CD8-positive, alpha-beta T cell (primary cell): ENCODE measurements at regions of chr15 and their contacts with region 1.

Region 1: GRCh38 chr15:67501177-67501835 is 19.6 kb upstream of the C15orf61 start:
- DNase-seq: peak in 2 of 9 experiments; percentile 24 to 38
- ATAC-seq: no peak
- H3K4me3 ChIP-seq: no peak overlapping the region
- H3K4me3 Mint-ChIP-seq: no peak overlapping the region
- H3K27ac ChIP-seq: no peak overlapping the region
- H3K27ac Mint-ChIP-seq: no peak overlapping the region
- H3K4me1 ChIP-seq: no peaks in the 10 kb centered on the region
- H3K4me1 Mint-ChIP-seq: no peaks in the 10 kb centered on the region
- H3K27me3 ChIP-seq: no peaks in the 10 kb centered on the region
- H3K27me3 Mint-ChIP-seq: no peaks in the 10 kb centered on the region
- CTCF ChIP-seq: peak; percentile 27

Region 2: DNA sequence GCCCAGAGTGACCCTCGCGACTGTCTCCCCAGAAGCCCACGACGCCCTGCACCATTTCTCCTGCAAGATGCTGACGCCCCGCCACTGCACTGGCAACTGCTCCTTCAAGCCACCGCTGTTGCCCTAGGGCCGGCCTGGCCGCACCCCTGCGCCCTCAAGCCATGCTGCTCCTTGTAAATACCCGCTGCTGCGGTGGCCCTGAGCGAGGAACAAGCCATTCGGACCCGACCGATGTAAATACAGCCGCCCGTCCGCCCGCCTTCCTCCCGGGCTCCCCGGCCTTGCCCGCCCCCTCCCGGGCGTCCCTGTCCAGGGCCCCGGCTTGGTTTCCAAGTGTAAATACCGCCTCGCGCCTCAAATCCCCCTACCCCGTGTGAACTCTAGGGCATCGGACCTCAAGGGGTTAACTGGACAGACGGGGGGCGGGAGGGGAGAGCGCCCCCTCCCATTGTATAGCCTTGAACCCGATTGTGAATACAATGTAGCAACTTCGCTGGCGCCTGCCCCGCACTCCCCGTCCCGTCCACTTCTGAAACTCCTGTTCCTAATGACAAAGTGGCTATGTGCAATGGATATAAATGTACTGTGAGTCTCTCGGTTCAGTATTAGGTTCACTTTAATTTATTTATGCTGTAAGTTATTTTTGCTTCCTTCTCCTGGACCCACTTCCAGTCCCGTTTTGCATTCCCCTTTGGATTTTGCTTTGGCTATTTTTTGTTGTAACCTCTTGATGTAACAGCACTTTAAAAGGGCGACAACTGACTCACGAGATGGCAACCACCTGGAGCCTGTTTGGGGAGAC is 332.6 kb after region 1 on chr15:
- CTCF ChIA-PET with region 1: interaction called, 15 read pairs
- POLR2A ChIA-PET with region 1: no interaction called
- intact Hi-C with region 1: loop called (anchors 1 to 2 kb)
- DNase-seq: peak in 5 of 9 experiments; percentile 30 to 69 (median 47)
- ATAC-seq: peak; percentile 37
- H3K4me3 ChIP-seq: peak overlapping the region; percentile 42 to 51
- H3K4me3 Mint-ChIP-seq: peak overlapping the region; percentile 83
- H3K27ac ChIP-seq: no peak overlapping the region
- H3K27ac Mint-ChIP-seq: no peak overlapping the region
- H3K4me1 ChIP-seq: peaks cover 48% of the 10 kb centered on the region
- H3K4me1 Mint-ChIP-seq: peaks cover 51% of the 10 kb centered on the region
- H3K27me3 ChIP-seq: peaks cover 46 to 57% of the 10 kb centered on the region in 2 experiments
- H3K27me3 Mint-ChIP-seq: peaks cover 53% of the 10 kb centered on the region
- CTCF ChIP-seq: peak; percentile 40